Activated CD4-positive, alpha-beta memory T cell treated with anti-CD3 and anti-CD28 coated beads, Interleukin-2, amount 10 ng/mL, durations not matched to agents 7 days and 5 days (primary cell): ENCODE measurements at regions of chr11 and their contacts with region 1.

Region 1: GRCh38 chr11:10413268-10413667 is 41.8 kb upstream of the AMPD3 start:
- DNase-seq: peak; percentile 64
- H3K4me3 Mint-ChIP-seq: no peak overlapping the region
- H3K27ac Mint-ChIP-seq: no peak overlapping the region
- H3K4me1 Mint-ChIP-seq: peaks cover 49% of the 10 kb centered on the region
- H3K27me3 Mint-ChIP-seq: peaks cover 10% of the 10 kb centered on the region

Region 2: DNA sequence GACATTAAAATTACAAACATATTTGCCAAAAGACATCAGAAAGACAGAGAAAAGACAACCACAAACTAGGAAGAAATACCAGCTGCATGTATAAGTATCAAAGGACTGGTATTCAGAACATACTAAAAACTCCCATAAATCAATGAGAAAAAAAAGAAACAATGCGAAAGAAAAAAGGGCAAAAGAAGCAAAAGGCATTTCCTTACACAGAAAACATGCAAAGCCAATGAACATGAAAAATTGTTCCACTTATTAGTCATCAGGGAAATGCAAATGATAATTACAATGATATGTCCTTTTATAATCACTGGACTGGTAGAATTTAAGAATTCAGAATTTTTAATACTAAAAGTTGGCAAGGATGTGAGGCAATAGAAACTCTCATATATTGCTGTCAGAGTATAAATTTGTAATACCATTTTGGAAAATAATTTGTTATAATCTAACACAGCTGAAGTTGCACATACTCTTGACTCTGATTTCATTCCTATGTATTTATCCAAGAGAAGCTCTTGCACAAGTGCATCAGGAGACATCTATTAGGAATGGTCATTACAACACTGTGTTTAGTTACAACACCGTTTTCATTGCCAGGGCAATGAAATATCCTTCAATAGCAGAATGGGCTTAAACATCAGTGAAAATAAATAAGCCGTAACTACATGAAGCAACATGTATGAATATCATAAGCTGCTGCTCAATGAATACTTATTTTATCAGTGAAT is 469.7 kb before region 1 on chr11:
- CTCF ChIA-PET with region 1: no interaction called
- POLR2A ChIA-PET with region 1: no interaction called
- DNase-seq: no peak
- H3K4me3 Mint-ChIP-seq: no peak overlapping the region
- H3K27ac Mint-ChIP-seq: no peak overlapping the region
- H3K4me1 Mint-ChIP-seq: no peaks in the 10 kb centered on the region
- H3K27me3 Mint-ChIP-seq: no peaks in the 10 kb centered on the region

Region 3: GRCh38 chr11:10379022-10379421 is 34.2 kb before region 1 on chr11:
- CTCF ChIA-PET with region 1: no interaction called
- POLR2A ChIA-PET with region 1: no interaction called
- DNase-seq: no peak
- H3K4me3 Mint-ChIP-seq: no peak overlapping the region
- H3K27ac Mint-ChIP-seq: no peak overlapping the region
- H3K4me1 Mint-ChIP-seq: no peaks in the 10 kb centered on the region
- H3K27me3 Mint-ChIP-seq: peaks cover 11% of the 10 kb centered on the region

Region 4: DNA sequence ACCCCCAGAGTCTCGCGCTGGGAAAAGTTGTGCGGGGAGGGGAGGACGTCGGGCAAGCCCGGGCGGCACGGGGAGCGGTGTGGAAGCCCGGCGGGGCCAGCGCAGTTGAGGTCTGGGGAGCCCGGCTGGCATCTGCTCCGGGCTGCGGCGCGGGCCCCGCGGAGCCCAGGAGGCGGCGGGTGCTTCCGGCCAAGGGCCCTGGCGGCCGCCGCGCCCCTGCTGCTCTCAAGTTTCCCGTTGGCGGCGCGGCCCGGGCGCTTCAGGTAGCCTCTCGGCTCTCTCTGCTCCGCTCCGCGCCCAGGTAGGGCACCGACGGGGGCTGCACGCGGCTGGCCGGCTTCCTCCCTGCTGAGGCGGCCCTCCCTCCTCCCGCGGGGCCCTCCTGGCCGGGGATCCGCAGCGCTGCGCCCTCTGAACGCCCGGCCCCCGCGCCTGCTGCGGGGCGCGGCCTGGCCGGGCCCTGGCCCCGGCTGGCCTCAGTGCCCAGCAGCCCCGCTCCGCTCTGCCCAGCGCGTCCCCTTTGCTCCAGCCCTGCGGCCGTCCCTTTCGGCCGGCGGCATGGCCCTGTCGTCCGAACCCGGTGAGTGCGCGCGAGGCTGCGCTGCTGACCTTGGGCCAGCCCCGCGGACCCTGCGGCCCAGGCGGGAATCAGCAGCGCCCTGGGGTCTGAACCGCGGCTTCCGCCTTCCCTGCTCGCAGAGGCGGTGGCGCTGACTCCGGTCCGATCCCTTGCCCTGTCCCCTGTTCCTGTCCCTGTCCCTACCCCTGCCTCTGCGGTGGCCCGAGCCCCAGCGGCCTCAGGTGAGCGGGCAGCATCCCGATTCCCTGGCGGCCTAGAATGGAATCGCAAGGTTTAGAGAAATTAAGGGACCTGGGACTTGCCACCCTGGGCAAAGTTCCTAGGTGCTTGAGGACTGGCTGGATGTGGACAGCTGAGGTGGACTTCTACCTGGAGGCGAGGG is 37.5 kb after region 1 on chr11:
- CTCF ChIA-PET with region 1: interaction called, 36 read pairs
- POLR2A ChIA-PET with region 1: interaction called, 16 read pairs
- DNase-seq: peak; percentile 57
- H3K4me3 Mint-ChIP-seq: peak overlapping the region; percentile 79
- H3K27ac Mint-ChIP-seq: peak overlapping the region; percentile 62
- H3K4me1 Mint-ChIP-seq: peaks cover 58% of the 10 kb centered on the region
- H3K27me3 Mint-ChIP-seq: peaks cover 18% of the 10 kb centered on the region

Region 5: DNA sequence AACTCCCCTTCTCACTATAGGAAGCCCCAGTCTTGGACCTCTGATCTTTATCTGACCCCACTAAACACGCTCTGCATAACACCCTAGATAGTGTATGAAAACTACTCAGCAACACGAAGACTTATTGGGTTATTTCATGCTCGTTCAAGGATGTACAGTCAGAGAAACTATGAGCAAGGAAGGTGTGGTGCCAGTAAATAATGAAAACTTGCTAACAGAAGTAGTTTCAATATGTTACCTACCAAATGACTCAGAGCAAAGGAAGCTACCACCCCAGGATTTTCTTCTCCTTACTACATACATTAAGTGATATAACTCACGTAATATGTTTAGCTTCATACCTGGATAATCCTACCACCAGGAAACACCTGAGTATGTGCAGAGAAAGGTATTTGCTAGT is 181.1 kb after region 1 on chr11:
- CTCF ChIA-PET with region 1: interaction called, 10 read pairs
- POLR2A ChIA-PET with region 1: no interaction called
- DNase-seq: no peak
- H3K4me3 Mint-ChIP-seq: no peak overlapping the region
- H3K27ac Mint-ChIP-seq: peak overlapping the region; percentile 66
- H3K4me1 Mint-ChIP-seq: peaks cover 42% of the 10 kb centered on the region
- H3K27me3 Mint-ChIP-seq: peaks cover 13% of the 10 kb centered on the region

Region 6: DNA sequence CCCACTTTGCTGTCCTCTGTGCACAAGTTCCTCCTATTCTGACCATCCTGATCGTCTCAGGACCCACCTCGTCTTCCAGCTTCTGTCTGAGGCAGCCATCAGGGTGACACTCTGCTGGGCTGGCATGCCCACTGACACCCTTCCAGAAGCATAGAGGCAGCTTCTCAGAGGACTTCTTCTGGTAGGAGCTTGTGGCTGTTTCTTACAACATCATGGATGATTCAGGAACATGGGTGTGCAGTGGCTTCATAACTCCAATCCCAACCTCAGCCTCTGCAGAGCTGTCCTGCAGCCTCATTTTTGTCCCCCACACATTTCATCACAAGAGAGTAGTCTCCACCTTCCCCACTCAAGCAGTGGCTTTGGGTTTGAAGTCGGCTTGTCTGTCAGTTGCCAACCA is 316.9 kb after region 1 on chr11:
- CTCF ChIA-PET with region 1: interaction called, 14 read pairs
- POLR2A ChIA-PET with region 1: no interaction called
- DNase-seq: no peak
- H3K4me3 Mint-ChIP-seq: no peak overlapping the region
- H3K27ac Mint-ChIP-seq: no peak overlapping the region
- H3K4me1 Mint-ChIP-seq: peaks cover 20% of the 10 kb centered on the region
- H3K27me3 Mint-ChIP-seq: peaks cover 12% of the 10 kb centered on the region

Region 7: GRCh38 chr11:10742471-10743208 is 329.4 kb after region 1 on chr11:
- CTCF ChIA-PET with region 1: interaction called, 24 read pairs
- POLR2A ChIA-PET with region 1: no interaction called
- DNase-seq: peak; percentile 71
- H3K4me3 Mint-ChIP-seq: peak overlapping the region; percentile 21
- H3K27ac Mint-ChIP-seq: peak overlapping the region; percentile 83
- H3K4me1 Mint-ChIP-seq: peaks cover 38% of the 10 kb centered on the region
- H3K27me3 Mint-ChIP-seq: no peaks in the 10 kb centered on the region